ENCODE measurements at regions of chr15 and their contacts with region 1.

Region 1: GRCh38 chr15:37995461-37996347 is 61.3 kb downstream of the TMCO5A start:
- DNase-seq: no peak
- H3K4me3 ChIP-seq: no peak overlapping the region
- H3K27ac ChIP-seq: no peak overlapping the region
- H3K4me1 ChIP-seq: no peaks in the 10 kb centered on the region
- H3K27me3 ChIP-seq: no peaks in the 10 kb centered on the region
- CTCF ChIP-seq: peak in 3 of 4 experiments; percentile 35 to 52 (median 43)
- POLR2A ChIP-seq: no peak

Region 2: GRCh38 chr15:37880009-37880834 is 115.5 kb before region 1 on chr15:
- intact Hi-C with region 1: no loop called
- DNase-seq: no peak
- H3K4me3 ChIP-seq: no peak overlapping the region
- H3K27ac ChIP-seq: no peak overlapping the region
- H3K4me1 ChIP-seq: no peaks in the 10 kb centered on the region
- H3K27me3 ChIP-seq: no peaks in the 10 kb centered on the region
- CTCF ChIP-seq: peak in 3 of 4 experiments; percentile 54 to 62 (median 59)
- POLR2A ChIP-seq: no peak

Region 3: GRCh38 chr15:37981775-37982174 is 13.9 kb before region 1 on chr15:
- intact Hi-C with region 1: no loop called
- DNase-seq: no peak
- H3K4me3 ChIP-seq: no peak overlapping the region
- H3K27ac ChIP-seq: no peak overlapping the region
- H3K4me1 ChIP-seq: no peaks in the 10 kb centered on the region
- H3K27me3 ChIP-seq: no peaks in the 10 kb centered on the region
- CTCF ChIP-seq: peak in 1 of 4 experiments; percentile 13
- POLR2A ChIP-seq: no peak

Region 4: GRCh38 chr15:38389924-38390542 is 394.3 kb after region 1 on chr15:
- intact Hi-C with region 1: loop called (anchors 1 kb)
- DNase-seq: peak; percentile 63
- H3K4me3 ChIP-seq: no peak overlapping the region
- H3K27ac ChIP-seq: no peak overlapping the region
- H3K4me1 ChIP-seq: no peaks in the 10 kb centered on the region
- H3K27me3 ChIP-seq: no peaks in the 10 kb centered on the region
- CTCF ChIP-seq: peak; percentile 43 to 74 (median 72)
- POLR2A ChIP-seq: no peak